Left cardiac atrium (tissue), 4 donors: ENCODE measurements at regions of chr1 and their contacts with region 1.

Region 1: DNA sequence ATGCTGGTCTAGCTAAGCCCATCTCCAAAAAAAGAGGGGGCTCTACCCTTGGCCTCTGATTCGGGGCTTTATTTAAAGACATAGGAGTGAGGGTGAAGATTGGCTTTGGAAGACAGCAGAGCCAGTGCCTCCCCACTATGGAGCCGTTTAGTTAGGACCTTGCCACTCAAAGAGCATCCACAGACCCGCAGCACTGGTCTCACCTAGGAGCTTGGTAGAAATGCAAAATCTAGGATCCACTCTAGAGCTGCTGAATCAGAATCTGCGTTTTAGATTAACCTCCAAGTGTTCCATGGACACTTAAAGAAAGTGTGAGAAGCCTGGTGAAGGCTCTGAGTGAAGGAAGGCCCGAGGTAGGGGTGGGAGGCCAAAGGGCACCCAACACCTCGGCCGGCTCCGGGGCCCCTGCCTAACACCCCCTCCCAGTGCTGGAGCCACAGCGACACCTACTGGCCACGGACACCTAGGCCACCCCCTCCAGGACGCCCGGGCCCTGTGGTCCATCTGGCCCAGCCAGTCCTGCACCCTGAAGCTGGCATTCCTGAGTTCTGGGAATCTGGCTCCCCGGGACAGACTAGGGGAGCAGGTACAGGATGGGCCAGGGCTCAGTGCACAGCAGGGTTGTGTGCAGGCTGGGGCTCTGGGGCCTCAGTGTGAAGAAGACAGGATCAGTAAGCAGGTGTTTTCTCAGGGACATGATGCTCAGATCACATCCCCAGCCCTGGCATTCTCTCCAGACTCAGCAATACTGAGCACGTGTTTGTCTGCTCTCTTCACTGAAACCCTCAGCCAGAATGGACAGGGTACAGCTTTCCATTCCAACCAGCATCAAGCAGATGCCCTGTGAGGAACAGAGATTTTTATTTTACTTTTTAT is 79.2 kb downstream of the TMEM53 start:
- DNase-seq: peak; percentile 85
- ATAC-seq: peak; percentile 86 to 96

Region 2: DNA sequence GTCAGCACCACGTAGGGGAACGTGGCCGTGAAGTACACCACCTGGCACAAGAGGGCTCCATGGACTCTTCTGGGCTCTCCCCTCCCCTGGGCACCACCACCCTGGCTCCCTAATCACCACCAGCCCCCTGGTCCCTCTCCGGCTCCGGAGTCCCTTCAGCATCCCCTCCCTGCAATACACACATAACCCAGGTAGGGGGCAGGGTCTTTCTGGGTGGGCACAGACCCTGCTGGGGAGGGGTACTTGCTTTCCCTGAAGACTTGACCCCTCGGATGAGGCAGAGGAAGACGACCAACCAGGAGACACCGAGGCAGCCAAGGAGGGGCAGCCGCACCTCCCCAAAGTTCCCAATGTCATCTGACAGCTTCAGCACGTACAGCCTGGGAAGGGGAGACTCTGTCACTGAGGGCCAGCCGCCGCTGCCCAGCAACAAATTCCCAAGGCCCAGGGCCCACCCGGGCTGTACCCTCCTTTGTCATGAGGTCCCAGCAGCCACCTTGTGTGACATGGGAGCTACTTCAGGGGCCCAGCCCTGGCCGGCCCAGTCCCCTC is 592.4 kb before region 1 on chr1:
- intact Hi-C with region 1: loop called in 1 of 2 experiments (anchors 10 kb)
- DNase-seq: no peak
- ATAC-seq: no peak

Region 3: DNA sequence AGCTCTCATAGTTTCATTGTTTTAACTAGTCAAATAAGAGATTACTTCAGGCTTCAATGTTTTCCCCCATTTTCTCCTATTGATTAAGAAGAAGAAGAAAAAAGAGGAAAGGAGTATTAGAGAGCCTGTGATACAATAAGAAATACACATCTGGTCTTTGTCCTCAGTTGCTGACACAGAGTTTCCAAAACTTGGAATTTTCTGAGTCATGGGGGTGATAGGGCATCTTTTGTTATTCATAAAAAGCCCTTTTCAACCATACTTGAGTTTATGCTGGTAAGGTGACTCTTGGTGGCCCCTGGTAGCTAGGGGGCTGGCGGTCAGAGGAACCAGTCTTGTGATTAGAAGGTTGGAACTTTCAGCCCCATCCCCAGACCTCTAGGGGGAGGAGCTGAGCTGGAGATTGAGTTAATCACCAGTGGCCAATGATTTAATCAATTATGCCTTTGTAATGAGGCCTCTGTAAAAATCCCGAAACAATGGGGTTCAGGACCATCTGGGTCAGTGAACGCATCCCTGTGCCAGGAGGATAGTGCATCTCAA is 424.8 kb before region 1 on chr1:
- intact Hi-C with region 1: no loop called
- DNase-seq: no peak
- ATAC-seq: no peak

Region 4: GRCh38 chr1:44213222-44214112 is 381.6 kb before region 1 on chr1 and contains the start of gene DMAP1:
- intact Hi-C with region 1: loop called (anchors 5 to 10 kb)
- DNase-seq: peak; percentile 84
- ATAC-seq: peak; percentile 94 to 95
- total RNA-seq, gene DMAP1: 23.6 to 25.4 TPM

Region 5: GRCh38 chr1:44377925-44378784 is 217.0 kb before region 1 on chr1:
- intact Hi-C with region 1: loop called (anchors 2 to 5 kb)
- DNase-seq: peak; percentile 41
- ATAC-seq: peak; percentile 29 to 55

Region 6: DNA sequence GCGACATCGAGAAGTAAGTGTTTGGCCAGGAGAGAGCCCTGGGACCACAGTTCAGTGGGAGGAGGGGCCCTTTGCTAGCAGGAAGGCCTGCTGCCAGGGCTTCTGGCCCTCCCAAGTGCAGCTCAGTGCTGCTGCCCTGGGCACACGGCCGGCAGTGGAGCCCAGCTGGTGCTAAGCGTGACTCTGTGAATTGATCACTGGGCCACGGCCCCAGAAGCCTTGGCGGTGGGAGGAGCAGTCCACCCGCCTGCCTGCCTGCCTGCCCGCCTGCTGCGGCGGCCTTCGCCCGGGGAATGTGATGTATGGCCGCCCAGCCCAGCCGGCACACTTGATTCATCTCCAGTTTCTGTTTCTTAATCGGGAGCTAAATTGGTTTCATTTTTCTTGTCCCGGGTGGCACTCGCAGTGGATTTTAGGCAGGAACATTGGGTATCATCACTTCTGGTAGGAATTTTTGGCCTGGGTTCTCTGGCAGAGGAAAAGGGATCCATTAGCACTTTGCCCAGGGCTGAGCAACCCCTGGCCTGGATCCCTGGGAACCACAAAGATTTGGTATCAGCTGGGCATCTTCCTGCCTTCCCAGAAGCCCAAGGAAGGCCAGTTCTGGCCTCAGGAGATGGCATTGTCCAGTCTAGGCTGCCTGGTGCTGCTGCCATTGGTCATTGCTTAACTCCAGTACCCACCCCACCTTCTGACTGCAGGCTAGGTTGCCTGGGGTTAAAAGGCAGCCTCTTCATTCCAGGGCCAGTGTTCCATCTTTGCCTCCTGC is 50.6 kb after region 1 on chr1:
- intact Hi-C with region 1: no loop called
- DNase-seq: peak; percentile 54
- ATAC-seq: peak; percentile 61 to 87